ENCODE measurements at regions of chr1 and their contacts with region 1.

Region 1: DNA sequence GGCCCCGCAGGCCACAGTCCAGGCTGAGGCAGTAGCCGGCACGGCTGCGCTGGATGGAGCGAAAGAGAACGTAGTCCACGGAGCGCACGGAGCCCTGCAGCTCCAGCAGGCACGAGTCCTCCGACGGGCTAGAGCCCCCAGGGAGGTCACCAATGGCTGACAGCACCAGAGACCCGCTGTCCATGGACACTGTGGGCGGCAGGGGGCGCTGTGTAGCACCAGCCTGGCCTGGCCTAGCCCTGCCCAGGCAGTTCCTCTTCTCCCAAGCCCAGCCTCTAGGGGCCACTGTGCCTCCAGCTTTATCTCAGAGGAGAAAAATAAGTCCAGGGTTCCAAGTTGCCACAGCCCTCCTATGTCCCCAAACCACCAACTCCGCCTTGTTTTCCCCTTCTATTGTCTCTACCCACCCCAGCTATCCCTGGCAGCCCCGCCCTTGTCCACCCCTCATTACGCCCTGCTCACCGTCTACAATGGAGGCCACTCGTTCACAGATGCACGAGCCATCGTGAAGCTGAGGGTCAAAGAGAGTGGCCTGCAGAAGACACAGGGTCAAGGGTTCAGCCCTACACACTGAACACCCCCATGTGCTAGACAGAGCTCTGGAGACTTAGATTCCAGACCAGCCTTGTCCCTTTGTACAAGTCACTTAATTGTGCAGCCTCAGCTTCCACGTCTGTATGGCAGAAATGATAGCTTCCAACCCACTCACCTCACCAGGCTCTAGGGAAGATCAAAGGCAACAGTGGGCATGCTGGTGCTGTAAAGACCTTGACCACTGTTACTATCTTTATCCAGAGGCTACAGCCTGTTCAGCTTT is 4.4 kb downstream of the ENTREP3 start:
- DNase-seq: peak; percentile 99
- ATAC-seq: peak; percentile 96
- H3K4me3 Mint-ChIP-seq: peak overlapping the region; percentile 38
- H3K27ac Mint-ChIP-seq: peak overlapping the region; percentile 31
- H3K4me1 Mint-ChIP-seq: peaks cover 25% of the 10 kb centered on the region
- H3K27me3 Mint-ChIP-seq: no peaks in the 10 kb centered on the region

Region 2: GRCh38 chr1:155091071-155091709 is 159.7 kb before region 1 on chr1:
- CTCF ChIA-PET with region 1: no interaction called
- POLR2A ChIA-PET with region 1: no interaction called
- intact Hi-C with region 1: no loop called
- DNase-seq: peak; percentile 90
- ATAC-seq: peak; percentile 88
- H3K4me3 Mint-ChIP-seq: no peak overlapping the region
- H3K27ac Mint-ChIP-seq: no peak overlapping the region
- H3K4me1 Mint-ChIP-seq: peaks cover 7% of the 10 kb centered on the region
- H3K27me3 Mint-ChIP-seq: peaks cover 6% of the 10 kb centered on the region

Region 3: GRCh38 chr1:155105604-155106022 is 145.2 kb before region 1 on chr1:
- CTCF ChIA-PET with region 1: no interaction called
- POLR2A ChIA-PET with region 1: no interaction called
- intact Hi-C with region 1: no loop called
- DNase-seq: no peak
- ATAC-seq: no peak
- H3K4me3 Mint-ChIP-seq: no peak overlapping the region
- H3K27ac Mint-ChIP-seq: no peak overlapping the region
- H3K4me1 Mint-ChIP-seq: no peaks in the 10 kb centered on the region
- H3K27me3 Mint-ChIP-seq: no peaks in the 10 kb centered on the region

Region 4: GRCh38 chr1:155208541-155209311 is 42.1 kb before region 1 on chr1 and contains the start of gene MTX1:
- CTCF ChIA-PET with region 1: interaction called, 15 read pairs
- POLR2A ChIA-PET with region 1: no interaction called
- intact Hi-C with region 1: no loop called
- DNase-seq: peak; percentile 93
- ATAC-seq: peak; percentile 87
- H3K4me3 Mint-ChIP-seq: peak within 1 kb of the TSS; percentile 89
- H3K27ac Mint-ChIP-seq: peak within 1 kb of the TSS; percentile 86
- H3K4me1 Mint-ChIP-seq: peaks cover 29% of the 10 kb centered on the region
- H3K27me3 Mint-ChIP-seq: no peaks in the 10 kb centered on the region
- total RNA-seq, gene MTX1: 52.8 to 52.9 TPM

Region 5: GRCh38 chr1:155261852-155262673 is 11.2 kb after region 1 on chr1 and contains the start of gene SCAMP3:
- CTCF ChIA-PET with region 1: interaction called, 47 read pairs
- POLR2A ChIA-PET with region 1: interaction called, 7 read pairs
- intact Hi-C with region 1: no loop called
- DNase-seq: peak; percentile 93
- ATAC-seq: peak; percentile 95
- H3K4me3 Mint-ChIP-seq: peak within 1 kb of the TSS; percentile 98
- H3K27ac Mint-ChIP-seq: peak within 1 kb of the TSS; percentile 91
- H3K4me1 Mint-ChIP-seq: peaks cover 27% of the 10 kb centered on the region
- H3K27me3 Mint-ChIP-seq: no peaks in the 10 kb centered on the region
- total RNA-seq, gene SCAMP3: 82.0 to 95.5 TPM

Region 6: GRCh38 chr1:155267373-155267772 is 16.5 kb after region 1 on chr1:
- CTCF ChIA-PET with region 1: interaction called, 47 read pairs
- POLR2A ChIA-PET with region 1: interaction called, 3 read pairs
- intact Hi-C with region 1: no loop called
- DNase-seq: no peak
- ATAC-seq: no peak
- H3K4me3 Mint-ChIP-seq: no peak overlapping the region
- H3K27ac Mint-ChIP-seq: no peak overlapping the region
- H3K4me1 Mint-ChIP-seq: peaks cover 24% of the 10 kb centered on the region
- H3K27me3 Mint-ChIP-seq: no peaks in the 10 kb centered on the region

Region 7: DNA sequence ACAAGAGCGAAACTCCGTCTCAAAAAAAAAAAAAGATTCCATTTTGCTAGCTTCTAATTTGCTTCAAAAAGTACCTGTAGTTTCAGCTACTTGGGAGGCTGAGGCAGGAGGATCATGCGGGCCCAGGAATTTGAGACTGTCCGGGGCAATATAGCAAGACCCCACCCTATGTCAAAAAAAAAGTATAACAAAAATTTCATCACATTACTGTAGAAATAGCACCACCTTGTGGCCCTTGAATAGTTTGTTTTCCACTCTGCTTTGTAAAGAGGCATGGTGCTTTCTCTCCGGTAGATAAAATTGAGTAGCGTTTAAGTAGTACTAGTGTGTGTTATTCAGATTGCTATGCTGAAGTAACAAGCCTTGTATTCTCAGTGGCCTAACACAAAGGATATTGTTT is 340.9 kb after region 1 on chr1:
- CTCF ChIA-PET with region 1: interaction called, 7 read pairs
- POLR2A ChIA-PET with region 1: no interaction called
- intact Hi-C with region 1: loop called (anchors 1 kb)
- DNase-seq: peak; percentile 17
- ATAC-seq: peak; percentile 75
- H3K4me3 Mint-ChIP-seq: no peak overlapping the region
- H3K27ac Mint-ChIP-seq: no peak overlapping the region
- H3K4me1 Mint-ChIP-seq: no peaks in the 10 kb centered on the region
- H3K27me3 Mint-ChIP-seq: no peaks in the 10 kb centered on the region